B cell (primary cell): ENCODE measurements at regions of chr1 and their contacts with region 1.

Region 1: DNA sequence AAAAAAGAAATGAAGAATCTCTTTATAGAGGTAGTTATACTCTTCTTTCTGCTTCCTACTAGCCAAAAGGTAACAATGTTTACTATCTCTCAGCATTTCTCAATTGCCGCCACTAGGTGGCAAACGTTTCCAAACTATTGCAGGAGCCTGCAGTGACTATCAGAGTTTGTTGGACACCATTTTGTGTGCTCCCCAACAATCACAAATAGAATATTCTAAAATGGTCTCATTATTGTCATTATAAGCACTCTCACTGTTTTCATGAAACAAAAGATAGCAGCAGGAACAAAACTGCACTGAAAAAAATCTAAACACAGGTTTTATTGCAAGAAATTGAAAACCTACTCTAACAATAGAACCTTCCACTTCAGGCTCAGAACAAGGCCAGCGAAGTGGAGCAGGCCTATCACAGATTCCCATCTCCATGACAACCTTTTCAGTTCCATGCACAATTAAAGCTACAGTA is 83.9 kb upstream of the PLPPR4 start:
- DNase-seq: peak; percentile 60
- ATAC-seq: peak; percentile 76
- H3K4me3 ChIP-seq: no peak overlapping the region
- H3K4me3 Mint-ChIP-seq: no peak overlapping the region
- H3K27ac ChIP-seq: no peak overlapping the region
- H3K27ac Mint-ChIP-seq: no peak overlapping the region
- H3K4me1 ChIP-seq: no peaks in the 10 kb centered on the region
- H3K4me1 Mint-ChIP-seq: no peaks in the 10 kb centered on the region
- H3K27me3 ChIP-seq: no peaks in the 10 kb centered on the region
- H3K27me3 Mint-ChIP-seq: no peaks in the 10 kb centered on the region
- CTCF ChIP-seq: peak; percentile 94

Region 2: DNA sequence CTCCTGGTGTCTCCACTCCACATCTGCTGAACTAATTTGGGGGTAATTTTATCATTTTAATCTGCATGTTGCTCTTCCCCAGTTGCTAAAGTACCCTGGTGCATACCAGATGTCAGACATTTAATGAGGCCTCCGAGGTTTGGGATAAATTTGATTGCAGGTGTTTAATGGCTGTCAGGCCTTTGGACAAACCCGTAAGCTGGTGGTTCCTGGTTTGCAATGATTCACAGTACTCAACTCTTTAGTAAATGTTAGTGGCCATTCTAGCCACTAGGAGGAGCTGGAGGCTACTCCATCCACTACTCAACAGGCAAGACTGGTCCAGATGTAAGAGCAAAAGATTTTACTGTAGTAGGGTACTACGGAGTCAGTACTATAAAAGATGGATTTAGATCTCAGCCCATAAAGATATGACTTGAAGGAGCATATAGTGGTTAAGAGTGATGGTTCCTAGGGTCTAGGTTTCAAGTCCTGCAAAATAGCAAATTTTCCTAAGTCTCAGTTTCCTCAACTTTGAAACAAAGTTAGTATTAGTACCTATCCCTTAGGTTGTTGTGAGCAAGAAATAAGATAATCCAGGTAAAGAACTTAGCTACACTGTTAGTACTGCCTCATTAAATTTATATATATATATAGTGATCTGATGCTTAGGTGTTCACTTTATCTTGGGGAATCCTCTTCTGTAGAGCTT is 386.0 kb before region 1 on chr1:
- CTCF ChIA-PET with region 1: interaction called, 10 read pairs
- POLR2A ChIA-PET with region 1: no interaction called
- intact Hi-C with region 1: loop called (anchors 1 kb)
- DNase-seq: peak; percentile 69
- ATAC-seq: peak; percentile 62
- H3K4me3 ChIP-seq: no peak overlapping the region
- H3K4me3 Mint-ChIP-seq: no peak overlapping the region
- H3K27ac ChIP-seq: no peak overlapping the region
- H3K27ac Mint-ChIP-seq: no peak overlapping the region
- H3K4me1 ChIP-seq: no peaks in the 10 kb centered on the region
- H3K4me1 Mint-ChIP-seq: peaks cover 2% of the 10 kb centered on the region
- H3K27me3 ChIP-seq: no peaks in the 10 kb centered on the region
- H3K27me3 Mint-ChIP-seq: no peaks in the 10 kb centered on the region
- CTCF ChIP-seq: peak; percentile 74

Region 3: DNA sequence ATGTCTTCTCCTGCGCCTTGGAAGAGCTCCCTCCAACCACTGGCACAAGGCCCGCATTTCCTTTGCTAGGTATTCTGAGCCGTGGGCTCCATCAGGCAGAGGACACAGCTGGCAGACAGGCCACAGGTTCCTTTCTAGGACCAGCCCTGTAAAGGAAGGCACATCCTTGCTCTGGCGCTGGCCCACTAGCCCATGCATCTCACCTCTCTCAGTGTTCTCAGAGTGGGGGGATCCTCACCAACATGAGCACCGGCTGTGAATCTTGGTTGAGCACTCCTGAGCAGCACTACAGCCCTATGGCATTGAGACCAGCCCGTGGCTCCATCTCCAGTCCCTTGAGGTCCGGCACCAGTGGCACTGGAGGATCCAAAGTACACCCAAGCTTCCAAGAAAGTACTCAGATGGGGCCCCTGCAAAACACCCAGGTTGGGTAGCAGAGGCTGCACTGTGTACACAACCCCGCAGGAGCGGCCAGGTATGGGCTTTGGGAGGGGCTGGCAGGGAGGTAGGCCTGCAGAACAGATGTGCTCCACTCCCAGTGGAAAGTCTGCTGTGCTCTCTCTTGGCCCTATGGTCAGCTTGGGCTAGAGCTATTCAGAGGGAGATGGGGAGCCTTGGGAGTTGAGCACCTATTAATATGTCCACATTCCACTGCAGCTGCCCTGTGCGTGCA is 128.6 kb before region 1 on chr1:
- CTCF ChIA-PET with region 1: no interaction called
- POLR2A ChIA-PET with region 1: no interaction called
- intact Hi-C with region 1: no loop called
- DNase-seq: no peak
- ATAC-seq: no peak
- H3K4me3 ChIP-seq: no peak overlapping the region
- H3K4me3 Mint-ChIP-seq: no peak overlapping the region
- H3K27ac ChIP-seq: no peak overlapping the region
- H3K27ac Mint-ChIP-seq: no peak overlapping the region
- H3K4me1 ChIP-seq: no peaks in the 10 kb centered on the region
- H3K4me1 Mint-ChIP-seq: no peaks in the 10 kb centered on the region
- H3K27me3 ChIP-seq: no peaks in the 10 kb centered on the region
- H3K27me3 Mint-ChIP-seq: no peaks in the 10 kb centered on the region
- CTCF ChIP-seq: no peak

Region 4: DNA sequence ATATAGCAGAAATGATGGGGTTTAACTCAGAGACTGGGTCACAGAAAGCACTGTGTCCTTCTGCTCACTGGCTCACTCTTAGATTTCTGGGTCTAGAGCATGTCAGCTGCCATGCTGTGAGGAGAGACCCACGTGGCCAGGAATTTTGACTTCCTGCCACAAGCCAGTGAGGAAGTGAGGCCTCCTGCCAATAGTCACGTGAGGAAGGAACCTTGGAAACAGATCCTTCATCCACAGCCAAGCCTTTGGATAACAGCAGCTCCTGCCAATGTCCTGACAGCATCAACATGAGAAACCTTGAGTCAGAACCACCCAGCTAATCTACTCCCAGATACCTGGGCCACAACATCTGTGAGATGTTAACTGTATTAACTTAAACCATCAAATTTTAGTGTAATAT is 61.2 kb before region 1 on chr1:
- CTCF ChIA-PET with region 1: no interaction called
- POLR2A ChIA-PET with region 1: no interaction called
- intact Hi-C with region 1: no loop called
- DNase-seq: no peak
- ATAC-seq: no peak
- H3K4me3 ChIP-seq: no peak overlapping the region
- H3K4me3 Mint-ChIP-seq: no peak overlapping the region
- H3K27ac ChIP-seq: no peak overlapping the region
- H3K27ac Mint-ChIP-seq: no peak overlapping the region
- H3K4me1 ChIP-seq: no peaks in the 10 kb centered on the region
- H3K4me1 Mint-ChIP-seq: no peaks in the 10 kb centered on the region
- H3K27me3 ChIP-seq: no peaks in the 10 kb centered on the region
- H3K27me3 Mint-ChIP-seq: no peaks in the 10 kb centered on the region
- CTCF ChIP-seq: no peak

Region 5: DNA sequence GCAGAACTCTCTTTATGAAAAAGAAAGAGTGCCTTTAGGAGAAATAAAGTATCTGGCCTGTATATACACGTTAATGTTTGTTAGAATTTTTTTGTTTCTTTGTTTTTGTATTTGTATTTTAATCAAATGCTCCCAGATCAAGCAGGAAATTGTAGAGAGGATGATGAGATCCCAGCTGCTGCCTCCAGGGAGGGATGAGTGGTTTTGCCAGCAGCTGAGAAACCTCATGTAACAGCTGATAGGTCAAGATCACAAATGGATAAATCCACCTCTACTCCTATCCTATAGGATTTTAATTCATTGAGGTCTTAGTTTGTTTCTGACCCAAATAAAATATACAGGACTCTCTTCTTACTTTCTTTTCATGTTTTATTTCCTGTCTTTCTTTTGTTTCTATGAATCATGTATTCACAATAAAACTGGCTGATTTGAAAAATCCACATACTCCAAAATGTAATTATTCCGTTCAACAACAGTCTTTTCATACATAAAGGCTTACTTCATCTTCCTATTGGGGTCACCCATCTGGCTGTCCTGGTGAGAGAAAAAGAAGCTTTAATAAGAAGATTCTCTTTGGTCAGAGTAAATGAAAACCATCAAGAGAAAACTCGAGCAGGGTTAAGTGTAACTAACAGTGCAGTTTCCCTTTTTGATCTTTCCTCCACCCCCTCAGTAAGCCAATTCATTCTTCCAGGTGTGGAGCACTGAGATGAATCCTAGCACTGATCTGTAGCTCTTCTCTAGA is 46.4 kb before region 1 on chr1:
- CTCF ChIA-PET with region 1: no interaction called
- POLR2A ChIA-PET with region 1: no interaction called
- intact Hi-C with region 1: no loop called
- DNase-seq: no peak
- ATAC-seq: no peak
- H3K4me3 ChIP-seq: no peak overlapping the region
- H3K4me3 Mint-ChIP-seq: no peak overlapping the region
- H3K27ac ChIP-seq: no peak overlapping the region
- H3K27ac Mint-ChIP-seq: no peak overlapping the region
- H3K4me1 ChIP-seq: no peaks in the 10 kb centered on the region
- H3K4me1 Mint-ChIP-seq: no peaks in the 10 kb centered on the region
- H3K27me3 ChIP-seq: no peaks in the 10 kb centered on the region
- H3K27me3 Mint-ChIP-seq: no peaks in the 10 kb centered on the region
- CTCF ChIP-seq: no peak

Region 6: GRCh38 chr1:99207216-99207615 is 26.8 kb after region 1 on chr1:
- CTCF ChIA-PET with region 1: no interaction called
- POLR2A ChIA-PET with region 1: no interaction called
- intact Hi-C with region 1: no loop called
- DNase-seq: no peak
- ATAC-seq: no peak
- H3K4me3 ChIP-seq: no peak overlapping the region
- H3K4me3 Mint-ChIP-seq: no peak overlapping the region
- H3K27ac ChIP-seq: no peak overlapping the region
- H3K27ac Mint-ChIP-seq: no peak overlapping the region
- H3K4me1 ChIP-seq: no peaks in the 10 kb centered on the region
- H3K4me1 Mint-ChIP-seq: no peaks in the 10 kb centered on the region
- H3K27me3 ChIP-seq: no peaks in the 10 kb centered on the region
- H3K27me3 Mint-ChIP-seq: no peaks in the 10 kb centered on the region
- CTCF ChIP-seq: no peak

Region 7: GRCh38 chr1:99707535-99708142 is 527.3 kb after region 1 on chr1:
- CTCF ChIA-PET with region 1: no interaction called
- POLR2A ChIA-PET with region 1: no interaction called
- intact Hi-C with region 1: loop called (anchors 2 kb)
- DNase-seq: peak; percentile 49
- ATAC-seq: peak; percentile 31
- H3K4me3 ChIP-seq: no peak overlapping the region
- H3K4me3 Mint-ChIP-seq: no peak overlapping the region
- H3K27ac ChIP-seq: no peak overlapping the region
- H3K27ac Mint-ChIP-seq: no peak overlapping the region
- H3K4me1 ChIP-seq: peaks cover 0 to 5% of the 10 kb centered on the region in 2 donors
- H3K4me1 Mint-ChIP-seq: peaks cover 4% of the 10 kb centered on the region
- H3K27me3 ChIP-seq: no peaks in the 10 kb centered on the region
- H3K27me3 Mint-ChIP-seq: no peaks in the 10 kb centered on the region
- CTCF ChIP-seq: peak; percentile 94